ENCODE measurements at regions of chr5 and their contacts with region 1.

Region 1: GRCh38 chr5:42889311-42889933 is 77.7 kb upstream of the SELENOP start:
- DNase-seq: peak; percentile 78 to 83
- H3K4me3 ChIP-seq: no peak overlapping the region
- H3K4me3 Mint-ChIP-seq: no peak overlapping the region
- H3K27ac Mint-ChIP-seq: no peak overlapping the region
- H3K4me1 ChIP-seq: peaks cover 32% of the 10 kb centered on the region
- H3K4me1 Mint-ChIP-seq: peaks cover 8% of the 10 kb centered on the region
- H3K27me3 ChIP-seq: no peaks in the 10 kb centered on the region
- H3K27me3 Mint-ChIP-seq: no peaks in the 10 kb centered on the region
- CTCF ChIP-seq: peak; percentile 91

Region 2: DNA sequence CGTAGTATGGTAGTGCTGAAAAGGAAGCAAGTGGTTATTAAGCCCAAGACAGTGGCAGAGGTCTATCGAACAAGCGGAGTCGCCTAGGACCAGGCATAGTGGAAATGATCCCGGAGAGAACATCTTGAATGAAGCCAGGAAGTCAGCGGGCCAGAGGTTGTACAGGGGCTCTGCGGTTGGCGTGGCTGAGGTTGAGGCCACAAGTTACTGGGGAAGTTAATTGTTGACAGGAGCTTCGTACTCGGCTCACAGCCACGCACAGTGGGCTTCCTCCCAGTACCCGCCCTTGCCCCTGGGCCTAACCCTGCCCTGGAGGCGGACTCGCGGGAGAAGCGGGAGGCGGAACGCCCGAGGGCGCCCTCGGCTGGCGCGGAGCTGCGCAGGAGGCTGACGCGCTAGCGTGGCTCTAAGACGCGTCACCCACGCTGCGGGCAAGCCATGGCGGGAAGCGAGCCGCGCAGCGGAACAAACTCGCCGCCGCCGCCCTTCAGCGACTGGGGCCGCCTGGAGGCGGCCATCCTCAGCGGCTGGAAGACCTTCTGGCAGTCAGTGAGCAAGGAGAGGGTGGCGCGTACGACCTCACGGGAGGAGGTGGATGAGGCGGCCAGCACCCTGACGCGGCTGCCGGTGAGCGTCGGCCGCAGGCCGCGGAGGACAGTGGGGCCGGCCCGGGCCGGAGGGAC is 964.4 kb before region 1 on chr5 and contains the start of gene FBXO4:
- CTCF ChIA-PET with region 1: no interaction called
- POLR2A ChIA-PET with region 1: no interaction called
- intact Hi-C with region 1: loop called (anchors 10 kb)
- DNase-seq: peak; percentile 87
- H3K4me3 ChIP-seq: peak within 1 kb of the TSS; percentile 71
- H3K4me3 Mint-ChIP-seq: peak within 1 kb of the TSS; percentile 87
- H3K27ac Mint-ChIP-seq: peak within 1 kb of the TSS; percentile 92
- H3K4me1 ChIP-seq: peaks cover 7% of the 10 kb centered on the region
- H3K4me1 Mint-ChIP-seq: no peaks in the 10 kb centered on the region
- H3K27me3 ChIP-seq: no peaks in the 10 kb centered on the region
- H3K27me3 Mint-ChIP-seq: no peaks in the 10 kb centered on the region
- CTCF ChIP-seq: peak; percentile 36 to 81
- total RNA-seq, gene FBXO4: 8.1 and 9.7 TPM in 2 replicates

Region 3: GRCh38 chr5:42423285-42424165 is 465.9 kb before region 1 on chr5 and contains the start of gene GHR:
- CTCF ChIA-PET with region 1: interaction called, 3 read pairs
- POLR2A ChIA-PET with region 1: no interaction called
- intact Hi-C with region 1: loop called (anchors 1 kb)
- DNase-seq: peak; percentile 83 to 84
- H3K4me3 ChIP-seq: peak within 1 kb of the TSS; percentile 63
- H3K4me3 Mint-ChIP-seq: no peak within 1 kb of the TSS
- H3K27ac Mint-ChIP-seq: no peak within 1 kb of the TSS
- H3K4me1 ChIP-seq: no peaks in the 10 kb centered on the region
- H3K4me1 Mint-ChIP-seq: no peaks in the 10 kb centered on the region
- H3K27me3 ChIP-seq: no peaks in the 10 kb centered on the region
- H3K27me3 Mint-ChIP-seq: no peaks in the 10 kb centered on the region
- CTCF ChIP-seq: peak; percentile 73 to 74
- total RNA-seq, gene GHR: 0.54 and 1.2 TPM in 2 replicates

Region 4: DNA sequence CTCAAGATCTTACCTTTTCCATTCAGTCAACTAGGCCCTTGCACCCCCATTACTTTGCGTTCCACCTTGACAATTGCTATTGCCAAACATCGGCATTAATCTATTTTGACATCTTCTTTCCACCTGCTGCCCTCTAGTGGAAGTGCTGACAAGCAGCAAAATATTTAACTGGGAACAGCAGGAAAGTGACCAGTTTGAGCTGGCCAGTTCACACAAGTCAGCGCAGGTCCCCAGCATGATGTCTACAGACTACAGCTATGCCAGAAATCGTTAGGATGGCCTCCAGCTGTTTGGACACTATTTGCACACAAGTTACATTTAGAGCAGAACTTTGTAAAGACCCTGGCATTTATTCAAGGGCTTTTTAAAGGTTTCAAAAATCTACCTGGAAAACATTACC is 306.1 kb before region 1 on chr5:
- CTCF ChIA-PET with region 1: interaction called, 8 read pairs
- POLR2A ChIA-PET with region 1: no interaction called
- intact Hi-C with region 1: loop called (anchors 1 kb)
- DNase-seq: peak; percentile 54 to 66
- H3K4me3 ChIP-seq: no peak overlapping the region
- H3K4me3 Mint-ChIP-seq: no peak overlapping the region
- H3K27ac Mint-ChIP-seq: no peak overlapping the region
- H3K4me1 ChIP-seq: no peaks in the 10 kb centered on the region
- H3K4me1 Mint-ChIP-seq: no peaks in the 10 kb centered on the region
- H3K27me3 ChIP-seq: no peaks in the 10 kb centered on the region
- H3K27me3 Mint-ChIP-seq: peaks cover 3% of the 10 kb centered on the region
- CTCF ChIP-seq: peak; percentile 69 to 72

Region 5: DNA sequence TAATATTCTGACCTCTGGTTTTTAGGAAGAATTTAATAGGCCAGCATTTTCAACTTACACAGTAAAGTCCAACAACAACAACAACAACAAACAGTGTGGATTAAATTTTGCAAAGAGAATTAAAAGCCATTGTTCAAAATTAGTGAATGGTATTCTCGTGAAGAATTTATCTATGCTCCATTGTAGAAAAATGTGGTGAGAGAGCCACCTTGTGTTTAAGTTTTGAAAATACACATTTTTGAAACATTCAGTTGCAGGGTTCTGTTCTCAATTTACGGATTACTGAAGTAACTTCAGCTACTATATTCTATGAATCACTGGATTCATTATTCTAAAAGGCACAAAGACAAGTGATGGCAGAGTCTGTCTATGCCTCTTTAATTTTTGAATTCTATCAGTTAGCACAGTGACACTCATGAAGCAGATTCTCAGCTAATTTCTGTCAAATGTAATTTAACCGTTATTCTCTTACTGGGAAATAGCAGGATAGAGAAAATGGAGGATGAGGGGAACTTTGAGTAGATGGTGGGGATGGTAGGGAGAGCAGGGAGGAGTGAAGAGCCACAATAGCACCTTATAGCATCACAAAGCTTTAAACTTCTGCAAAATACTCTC is 121.8 kb before region 1 on chr5:
- CTCF ChIA-PET with region 1: interaction called, 17 read pairs
- POLR2A ChIA-PET with region 1: no interaction called
- intact Hi-C with region 1: loop called (anchors 1 kb)
- DNase-seq: peak in 1 of 2 experiments; percentile 31
- H3K4me3 ChIP-seq: no peak overlapping the region
- H3K4me3 Mint-ChIP-seq: peak overlapping the region; percentile 53
- H3K27ac Mint-ChIP-seq: no peak overlapping the region
- H3K4me1 ChIP-seq: peaks cover 12% of the 10 kb centered on the region
- H3K4me1 Mint-ChIP-seq: peaks cover 16% of the 10 kb centered on the region
- H3K27me3 ChIP-seq: no peaks in the 10 kb centered on the region
- H3K27me3 Mint-ChIP-seq: no peaks in the 10 kb centered on the region
- CTCF ChIP-seq: peak; percentile 24 to 63

Region 6: DNA sequence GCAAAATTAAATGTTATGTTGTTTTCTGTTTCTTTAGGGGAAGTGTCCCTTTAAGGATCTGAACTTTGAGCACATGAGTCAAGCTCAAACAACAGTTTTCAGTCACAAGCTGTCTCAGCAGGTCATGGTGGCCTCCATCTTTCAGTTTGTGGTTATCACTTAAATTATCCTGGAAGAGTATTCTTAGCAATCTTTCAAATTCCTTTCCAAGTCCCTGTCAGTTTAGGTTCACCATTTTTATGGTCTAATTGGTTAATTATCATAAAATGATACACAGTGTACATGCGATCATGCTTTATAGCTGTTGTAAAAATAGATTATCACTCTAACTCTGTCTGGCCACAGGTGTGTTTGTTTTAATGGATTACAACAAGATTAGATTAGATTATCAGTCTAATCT is 34.6 kb before region 1 on chr5:
- CTCF ChIA-PET with region 1: interaction called, 3 read pairs
- POLR2A ChIA-PET with region 1: interaction called, 3 read pairs
- intact Hi-C with region 1: loop called (anchors 1 kb)
- DNase-seq: peak; percentile 60 to 74
- H3K4me3 ChIP-seq: no peak overlapping the region
- H3K4me3 Mint-ChIP-seq: no peak overlapping the region
- H3K27ac Mint-ChIP-seq: peak overlapping the region; percentile 51
- H3K4me1 ChIP-seq: peaks cover 39% of the 10 kb centered on the region
- H3K4me1 Mint-ChIP-seq: peaks cover 20% of the 10 kb centered on the region
- H3K27me3 ChIP-seq: no peaks in the 10 kb centered on the region
- H3K27me3 Mint-ChIP-seq: no peaks in the 10 kb centered on the region
- CTCF ChIP-seq: no peak